Panc1 (cell line): ENCODE measurements at regions of chr12 and their contacts with region 1.

Region 1: DNA sequence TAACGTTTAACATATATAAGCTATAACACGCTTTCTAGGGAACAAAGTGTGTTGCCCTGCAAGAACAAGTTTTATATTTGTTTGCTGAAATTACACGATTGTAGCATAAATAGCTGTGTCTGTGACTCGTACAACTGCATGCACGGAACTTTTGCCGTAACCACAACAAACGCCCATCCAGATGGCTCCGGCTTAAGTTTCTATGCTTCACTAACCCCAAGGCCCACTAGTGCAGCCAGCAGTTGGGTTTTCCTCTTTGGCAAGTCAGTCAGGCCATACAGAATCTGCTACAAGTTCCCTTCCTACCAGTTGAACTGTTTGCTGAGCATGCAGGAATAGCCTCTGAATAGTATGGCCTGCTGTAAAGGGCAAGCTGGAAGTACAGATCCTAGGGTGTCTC is 12.1 kb downstream of the CSRP2 start:
- DNase-seq: no peak
- ATAC-seq: no peak
- H3K4me3 ChIP-seq: no peak overlapping the region
- H3K27ac ChIP-seq: no peak overlapping the region
- H3K4me1 ChIP-seq: no peaks in the 10 kb centered on the region
- H3K27me3 ChIP-seq: no peaks in the 10 kb centered on the region
- CTCF ChIP-seq: no peak

Region 2: DNA sequence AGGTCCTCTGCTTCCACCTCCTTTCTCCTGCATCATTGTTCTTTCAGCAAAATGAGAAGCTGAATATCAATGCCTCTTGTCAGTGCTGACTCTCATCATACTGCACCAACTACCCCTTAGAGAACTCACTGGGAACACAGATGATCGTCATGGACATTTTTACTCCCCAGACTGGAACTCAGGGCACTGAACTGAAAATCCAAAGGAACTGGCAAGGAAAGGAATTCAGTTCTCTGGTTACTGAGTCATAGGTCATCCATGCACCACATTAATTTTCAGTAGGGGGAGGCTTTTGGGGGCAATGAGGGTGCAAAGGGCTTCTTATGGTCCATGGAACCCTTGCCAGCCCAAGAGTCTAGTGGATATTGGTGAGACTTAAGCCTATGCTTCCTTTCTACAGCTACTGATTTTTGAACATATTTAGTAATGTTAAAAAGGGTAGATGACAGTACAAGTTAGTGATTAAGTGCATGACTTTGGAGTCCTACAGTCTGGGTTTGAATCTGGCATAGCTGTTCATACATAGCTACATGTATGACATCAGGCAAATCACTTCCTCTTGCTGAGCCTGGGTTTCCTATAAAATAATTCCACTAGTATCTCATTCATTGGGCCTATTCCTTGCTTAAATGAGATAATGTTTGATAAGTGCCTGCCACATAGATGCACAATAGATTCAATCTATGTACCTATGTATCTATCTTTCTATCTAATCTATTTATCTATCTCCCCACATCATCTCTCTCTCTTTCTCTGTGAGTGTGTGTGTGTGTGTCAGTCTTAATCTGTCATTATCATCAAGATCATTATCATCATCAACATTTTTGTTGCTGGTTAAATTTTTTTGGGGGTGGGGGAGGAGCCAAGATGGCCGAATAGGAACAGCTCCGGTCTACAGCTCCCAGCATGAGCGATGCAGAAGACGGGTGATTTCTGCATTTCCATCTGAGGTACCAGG is 547.7 kb before region 1 on chr12:
- CTCF ChIA-PET with region 1: no interaction called
- POLR2A ChIA-PET with region 1: no interaction called
- in situ Hi-C with region 1: no loop called
- intact Hi-C with region 1: no loop called
- DNase-seq: no peak
- ATAC-seq: no peak
- H3K4me3 ChIP-seq: no peak overlapping the region
- H3K27ac ChIP-seq: no peak overlapping the region
- H3K4me1 ChIP-seq: no peaks in the 10 kb centered on the region
- H3K27me3 ChIP-seq: no peaks in the 10 kb centered on the region
- CTCF ChIP-seq: no peak

Region 3: GRCh38 chr12:76915361-76916169 is 48.8 kb after region 1 on chr12:
- CTCF ChIA-PET with region 1: no interaction called
- POLR2A ChIA-PET with region 1: interaction called, 14 read pairs
- in situ Hi-C with region 1: no loop called
- intact Hi-C with region 1: no loop called
- DNase-seq: no peak
- ATAC-seq: no peak
- H3K4me3 ChIP-seq: no peak overlapping the region
- H3K27ac ChIP-seq: no peak overlapping the region
- H3K4me1 ChIP-seq: no peaks in the 10 kb centered on the region
- H3K27me3 ChIP-seq: peaks cover 11% of the 10 kb centered on the region; the same call in 1 of the 2 replicates
- CTCF ChIP-seq: no peak

Region 4: GRCh38 chr12:78290606-78291345 is 1424.0 kb after region 1 on chr12:
- CTCF ChIA-PET with region 1: interaction called, 12 read pairs
- POLR2A ChIA-PET with region 1: no interaction called
- in situ Hi-C with region 1: no loop called
- intact Hi-C with region 1: no loop called
- DNase-seq: no peak
- ATAC-seq: no peak
- H3K4me3 ChIP-seq: no peak overlapping the region
- H3K27ac ChIP-seq: no peak overlapping the region
- H3K4me1 ChIP-seq: no peaks in the 10 kb centered on the region
- H3K27me3 ChIP-seq: no peaks in the 10 kb centered on the region
- CTCF ChIP-seq: no peak